H1 (cell line): ENCODE measurements at regions of chr3 and their contacts with region 1.

Region 1: GRCh38 chr3:122754929-122755328 is 38.7 kb downstream of the HSPBAP1 start:
- DNase-seq: no peak
- H3K4me3 ChIP-seq: no peak overlapping the region
- H3K27ac ChIP-seq: no peak overlapping the region
- H3K4me1 ChIP-seq: peaks cover 0 to 2% (median 0%) of the 10 kb centered on the region in 4 experiments; a peak in 2 of 7 replicates
- H3K27me3 ChIP-seq: no peaks in the 10 kb centered on the region
- CTCF ChIP-seq: peak; percentile 7 to 94 (median 76)
- EP300 ChIP-seq: no peak
- POLR2A ChIP-seq: no peak
- RAD21 ChIP-seq: peak; percentile 90 to 91

Region 2: GRCh38 chr3:122864498-122864897 is 109.6 kb after region 1 on chr3:
- CTCF ChIA-PET with region 1: no interaction called
- POLR2A ChIA-PET with region 1: no interaction called
- DNase-seq: no peak
- H3K4me3 ChIP-seq: no peak overlapping the region
- H3K27ac ChIP-seq: no peak overlapping the region
- H3K4me1 ChIP-seq: no peaks in the 10 kb centered on the region
- H3K27me3 ChIP-seq: no peaks in the 10 kb centered on the region
- CTCF ChIP-seq: no peak
- EP300 ChIP-seq: no peak
- POLR2A ChIP-seq: no peak
- RAD21 ChIP-seq: no peak

Region 3: GRCh38 chr3:122921791-122922651 is 167.1 kb after region 1 on chr3:
- CTCF ChIA-PET with region 1: interaction called, 12 read pairs
- POLR2A ChIA-PET with region 1: no interaction called
- DNase-seq: peak in 1 of 2 experiments; percentile 85
- H3K4me3 ChIP-seq: peak overlapping the region; percentile 35 to 62 (median 54)
- H3K27ac ChIP-seq: no peak overlapping the region
- H3K4me1 ChIP-seq: peaks cover 0 to 3% (median 2%) of the 10 kb centered on the region in 4 experiments; a peak in 4 of 7 replicates
- H3K27me3 ChIP-seq: peaks cover 0 to 24% (median 17%) of the 10 kb centered on the region in 4 experiments; a peak in 5 of 7 replicates
- CTCF ChIP-seq: peak; percentile 42 to 53 (median 45)
- EP300 ChIP-seq: no peak
- POLR2A ChIP-seq: no peak
- RAD21 ChIP-seq: peak; percentile 32 to 56